ENCODE measurements at regions of chr16 and their contacts with region 1.

Region 1: DNA sequence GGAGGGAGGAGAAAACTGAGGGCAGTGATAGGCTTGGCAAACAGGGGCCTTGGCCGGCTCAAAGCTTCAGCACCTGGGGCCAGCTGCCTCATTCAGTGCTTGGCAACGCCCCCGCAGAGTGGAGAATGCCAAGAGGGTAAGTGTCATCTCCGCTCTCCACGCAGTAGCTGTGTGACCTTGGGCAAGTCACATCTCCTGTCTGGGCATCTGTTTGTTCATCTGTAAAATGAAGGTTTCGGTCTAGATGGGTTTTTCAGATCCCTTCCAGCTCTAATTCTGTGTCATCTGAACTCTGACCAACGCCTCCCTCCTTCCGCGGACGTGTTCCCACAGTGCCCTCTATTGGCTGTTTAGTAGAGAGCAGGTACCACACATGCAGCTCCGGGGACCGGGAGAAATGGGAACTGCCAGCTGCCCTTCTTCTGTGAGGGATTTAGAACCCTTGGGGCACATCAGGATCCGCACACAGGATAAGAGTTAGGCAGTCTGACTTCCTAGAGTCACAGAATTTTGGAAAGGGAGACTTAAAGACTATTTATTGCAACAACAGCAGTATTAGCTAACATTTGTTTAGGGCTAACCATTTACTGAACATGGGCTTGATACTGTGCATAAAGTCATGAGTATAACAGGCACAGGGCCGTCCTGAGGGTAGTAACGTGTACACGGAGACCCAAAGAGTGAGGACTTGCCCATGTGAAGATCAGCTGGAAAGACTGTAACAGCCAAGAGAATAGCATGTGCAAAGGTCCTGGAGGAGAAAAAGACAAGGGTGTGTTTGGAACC is 26.8 kb downstream of the GP2 start:
- H3K4me3 ChIP-seq: no peak overlapping the region
- H3K27ac ChIP-seq: no peak overlapping the region
- H3K4me1 ChIP-seq: no peaks in the 10 kb centered on the region
- CTCF ChIP-seq: 0 out of 2 replicates have a peak, but pooled peaks have one; percentile 16

Region 2: GRCh38 chr16:19898924-19899604 is 401.4 kb before region 1 on chr16:
- CTCF ChIA-PET with region 1: interaction called, 46 read pairs
- POLR2A ChIA-PET with region 1: no interaction called
- H3K4me3 ChIP-seq: no peak overlapping the region
- H3K27ac ChIP-seq: no peak overlapping the region
- H3K4me1 ChIP-seq: no peaks in the 10 kb centered on the region
- CTCF ChIP-seq: peak; percentile 34

Region 3: DNA sequence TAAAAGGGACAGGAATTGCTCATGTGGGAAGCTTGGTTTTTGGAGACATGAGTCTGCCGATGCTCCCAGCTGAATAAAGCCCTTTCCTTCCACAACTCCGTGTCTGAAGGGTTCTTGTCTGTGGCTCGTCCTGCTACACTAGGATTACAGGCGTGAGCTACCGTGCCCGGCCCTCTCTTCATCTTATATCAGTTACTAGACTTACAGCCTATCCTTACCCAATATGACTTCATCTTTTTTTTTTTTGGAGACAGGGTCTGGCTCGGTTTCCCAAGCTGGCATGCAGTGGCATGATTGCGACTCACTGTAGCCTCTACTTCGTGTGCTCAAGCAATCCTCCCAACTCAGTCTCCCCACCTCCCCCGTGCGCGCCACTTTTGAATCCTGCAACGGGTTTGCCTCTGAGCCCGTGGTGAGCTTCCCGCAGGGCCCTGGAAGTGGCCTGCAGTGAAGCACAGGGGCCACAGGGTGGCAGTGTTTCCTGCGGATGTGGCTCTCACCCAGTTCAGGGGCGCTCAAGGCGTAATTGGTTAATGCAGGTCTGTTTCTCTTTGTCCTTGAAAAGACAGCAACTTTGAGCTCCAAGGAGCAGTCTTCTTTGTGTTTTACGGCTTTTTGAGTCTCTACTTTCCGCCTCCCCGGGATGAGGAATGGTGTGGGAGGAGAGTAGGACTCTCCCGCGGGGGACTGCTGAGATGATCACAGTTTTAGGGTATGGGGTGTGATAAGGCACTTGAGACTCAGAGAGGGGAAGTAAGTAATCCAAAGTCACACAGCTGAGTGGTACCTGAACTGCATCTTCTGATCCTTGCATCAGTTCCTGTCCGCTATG is 393.1 kb before region 1 on chr16:
- CTCF ChIA-PET with region 1: interaction called, 101 read pairs
- POLR2A ChIA-PET with region 1: interaction called, 4 read pairs
- H3K4me3 ChIP-seq: no peak overlapping the region
- H3K27ac ChIP-seq: no peak overlapping the region
- H3K4me1 ChIP-seq: no peaks in the 10 kb centered on the region
- CTCF ChIP-seq: peak; percentile 89

Region 4: GRCh38 chr16:20310421-20311395 is 10.2 kb after region 1 on chr16:
- CTCF ChIA-PET with region 1: interaction called, 26 read pairs
- POLR2A ChIA-PET with region 1: no interaction called
- H3K4me3 ChIP-seq: no peak overlapping the region
- H3K27ac ChIP-seq: no peak overlapping the region
- H3K4me1 ChIP-seq: no peaks in the 10 kb centered on the region
- CTCF ChIP-seq: no peak

Measured in HEK293 (cell line).